ENCODE measurements at regions of chr5 and their contacts with region 1.

Region 1: DNA sequence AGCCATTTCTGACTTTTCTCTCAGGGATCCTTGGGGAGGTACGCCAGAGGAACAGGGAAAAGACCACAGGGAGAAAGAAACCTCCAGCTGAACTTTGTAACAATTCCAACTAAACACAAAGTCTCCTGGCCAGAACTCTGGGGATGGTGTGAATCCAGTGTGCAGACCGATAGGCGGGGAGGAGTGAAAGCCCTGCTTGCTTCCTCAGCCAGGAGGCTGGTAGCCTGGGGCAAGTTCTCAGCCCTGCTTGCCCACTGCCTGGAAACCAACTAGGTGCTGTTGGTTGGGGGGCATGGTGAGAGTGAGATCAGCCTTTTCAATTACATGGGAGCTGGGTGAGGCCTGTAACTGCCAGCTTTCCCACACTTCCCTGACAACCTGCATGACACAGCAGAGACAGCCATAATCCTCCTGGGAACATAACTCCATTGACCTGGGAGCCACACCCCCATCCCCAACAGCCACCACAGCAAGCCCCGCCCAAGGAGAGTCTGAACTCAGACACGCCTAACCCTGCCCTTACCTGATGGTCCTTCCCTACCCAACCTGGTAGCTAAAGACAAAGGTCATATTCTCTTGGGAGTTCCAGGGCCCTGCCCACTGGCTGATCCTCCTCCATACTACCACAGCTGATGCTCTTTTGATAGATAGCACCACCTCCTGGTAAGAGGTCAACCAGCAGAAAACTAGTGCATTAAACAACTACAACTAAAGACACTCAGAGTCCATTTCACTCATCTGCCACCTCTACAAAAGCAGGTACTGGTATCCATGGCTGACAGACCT is 100.1 kb upstream of the TNFAIP8 start:
- DNase-seq: peak; percentile 74
- ATAC-seq: peak; percentile 95
- H3K4me3 ChIP-seq: 0 out of 6 replicates have a peak overlapping the region, but pooled peaks of 1 of the 3 experiments have one; percentile 12
- H3K27ac ChIP-seq: peak overlapping the region; percentile 35
- H3K4me1 ChIP-seq: peaks cover 16% of the 10 kb centered on the region
- H3K27me3 ChIP-seq: no peaks in the 10 kb centered on the region
- CTCF ChIP-seq: peak; percentile 77
- EP300 ChIP-seq: no peak
- POLR2A ChIP-seq: no peak
- RAD21 ChIP-seq: peak; percentile 60; the same call in 1 of the 2 replicates

Region 2: GRCh38 chr5:118506217-118506852 is 749.4 kb before region 1 on chr5:
- CTCF ChIA-PET with region 1: no interaction called
- POLR2A ChIA-PET with region 1: no interaction called
- in situ Hi-C with region 1: no loop called
- intact Hi-C with region 1: no loop called
- DNase-seq: no peak
- ATAC-seq: no peak
- H3K4me3 ChIP-seq: no peak overlapping the region
- H3K27ac ChIP-seq: no peak overlapping the region
- H3K4me1 ChIP-seq: no peaks in the 10 kb centered on the region
- H3K27me3 ChIP-seq: no peaks in the 10 kb centered on the region
- CTCF ChIP-seq: no peak
- EP300 ChIP-seq: no peak
- POLR2A ChIP-seq: no peak
- RAD21 ChIP-seq: no peak

Region 3: GRCh38 chr5:119022017-119022745 is 233.6 kb before region 1 on chr5:
- CTCF ChIA-PET with region 1: no interaction called
- POLR2A ChIA-PET with region 1: no interaction called
- in situ Hi-C with region 1: no loop called
- intact Hi-C with region 1: loop called (anchors 1 kb)
- DNase-seq: no peak
- ATAC-seq: peak; percentile 76
- H3K4me3 ChIP-seq: no peak overlapping the region
- H3K27ac ChIP-seq: no peak overlapping the region
- H3K4me1 ChIP-seq: no peaks in the 10 kb centered on the region
- H3K27me3 ChIP-seq: no peaks in the 10 kb centered on the region
- CTCF ChIP-seq: peak; percentile 56
- EP300 ChIP-seq: no peak
- POLR2A ChIP-seq: no peak
- RAD21 ChIP-seq: peak; percentile 27; the same call in 1 of the 2 replicates